Activated B cell treated with CpG ODN at 0.5 μM for 24 hours (primary cell): ENCODE measurements at regions of chrX and their contacts with region 1.

Region 1: GRCh38 chrX:40647307-40648197 is at the start of gene CXorf38:
- DNase-seq: peak; percentile 83
- ATAC-seq: peak; percentile 67
- H3K4me3 Mint-ChIP-seq: peak within 1 kb of the TSS; percentile 94
- H3K27ac Mint-ChIP-seq: peak within 1 kb of the TSS; percentile 93
- H3K4me1 Mint-ChIP-seq: peaks cover 39% of the 10 kb centered on the region
- H3K27me3 Mint-ChIP-seq: no peaks in the 10 kb centered on the region
- CTCF ChIP-seq: no peak
- total RNA-seq, gene CXorf38: 20.9 and 21.9 TPM in 2 replicates

Region 2: GRCh38 chrX:40402831-40403533 is 244.6 kb before region 1 on chrX:
- CTCF ChIA-PET with region 1: no interaction called
- POLR2A ChIA-PET with region 1: no interaction called
- intact Hi-C with region 1: no loop called
- DNase-seq: no peak
- ATAC-seq: no peak
- H3K4me3 Mint-ChIP-seq: no peak overlapping the region
- H3K27ac Mint-ChIP-seq: no peak overlapping the region
- H3K4me1 Mint-ChIP-seq: peaks cover 9% of the 10 kb centered on the region
- H3K27me3 Mint-ChIP-seq: no peaks in the 10 kb centered on the region
- CTCF ChIP-seq: no peak

Region 3: GRCh38 chrX:40580537-40581335 is 66.8 kb before region 1 on chrX and contains the start of gene ATP6AP2:
- CTCF ChIA-PET with region 1: no interaction called
- POLR2A ChIA-PET with region 1: no interaction called
- intact Hi-C with region 1: loop called (anchors 1 kb)
- DNase-seq: peak; percentile 71
- ATAC-seq: peak; percentile 95
- H3K4me3 Mint-ChIP-seq: peak within 1 kb of the TSS; percentile 92
- H3K27ac Mint-ChIP-seq: peak within 1 kb of the TSS; percentile 94
- H3K4me1 Mint-ChIP-seq: peaks cover 27% of the 10 kb centered on the region
- H3K27me3 Mint-ChIP-seq: no peaks in the 10 kb centered on the region
- CTCF ChIP-seq: no peak
- total RNA-seq, gene ATP6AP2: 48.6 and 53.8 TPM in 2 replicates

Region 4: DNA sequence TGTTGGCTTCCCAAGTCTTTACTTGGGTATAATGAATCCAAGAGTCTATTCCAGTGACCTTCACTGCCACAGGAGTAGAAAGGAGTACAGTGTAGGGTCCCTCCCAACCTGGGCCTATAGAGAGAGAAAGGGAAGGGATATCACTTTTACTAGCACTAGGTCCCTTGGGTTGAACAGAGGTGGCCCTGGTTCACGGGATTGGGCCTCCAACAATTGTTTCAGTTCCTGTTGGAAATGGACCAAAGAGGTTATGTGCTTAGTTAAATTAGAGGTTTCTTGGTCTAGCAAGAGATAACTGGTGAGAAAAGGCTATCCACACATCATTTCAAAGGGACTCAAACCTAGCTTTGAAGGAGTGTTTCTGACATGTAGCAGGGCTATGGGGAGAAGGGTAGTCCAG is 144.9 kb after region 1 on chrX:
- CTCF ChIA-PET with region 1: interaction called, 70 read pairs
- POLR2A ChIA-PET with region 1: interaction called, 3 read pairs
- intact Hi-C with region 1: loop called (anchors 1 kb)
- DNase-seq: no peak
- ATAC-seq: no peak
- H3K4me3 Mint-ChIP-seq: no peak overlapping the region
- H3K27ac Mint-ChIP-seq: no peak overlapping the region
- H3K4me1 Mint-ChIP-seq: peaks cover 1% of the 10 kb centered on the region
- H3K27me3 Mint-ChIP-seq: peaks cover 3% of the 10 kb centered on the region
- CTCF ChIP-seq: no peak

Region 5: DNA sequence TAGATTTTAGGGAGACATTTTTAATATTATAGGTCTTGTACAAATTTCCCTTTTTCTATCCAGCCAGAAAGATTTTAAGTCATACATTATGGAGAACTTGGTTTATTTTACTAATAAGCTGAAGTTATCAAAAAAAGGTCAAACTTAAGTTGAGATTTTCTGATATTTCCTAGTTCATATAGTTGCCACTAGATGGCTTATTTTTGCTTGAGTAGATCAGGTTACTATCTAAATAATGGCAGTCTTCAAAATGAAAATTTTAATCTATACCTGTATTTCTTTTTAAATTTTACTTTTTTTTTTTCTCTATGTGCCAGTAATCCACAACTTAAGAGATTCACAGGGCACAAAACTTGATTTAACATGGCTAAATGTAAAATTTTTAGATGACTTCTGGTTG is 490.0 kb after region 1 on chrX:
- CTCF ChIA-PET with region 1: no interaction called
- POLR2A ChIA-PET with region 1: no interaction called
- intact Hi-C with region 1: loop called (anchors 5 kb)
- DNase-seq: no peak
- ATAC-seq: no peak
- H3K4me3 Mint-ChIP-seq: no peak overlapping the region
- H3K27ac Mint-ChIP-seq: no peak overlapping the region
- H3K4me1 Mint-ChIP-seq: no peaks in the 10 kb centered on the region
- H3K27me3 Mint-ChIP-seq: no peaks in the 10 kb centered on the region
- CTCF ChIP-seq: no peak

Region 6: GRCh38 chrX:41984650-41985049 is 1337.1 kb after region 1 on chrX:
- CTCF ChIA-PET with region 1: no interaction called
- POLR2A ChIA-PET with region 1: no interaction called
- intact Hi-C with region 1: no loop called
- DNase-seq: no peak
- ATAC-seq: no peak
- H3K4me3 Mint-ChIP-seq: no peak overlapping the region
- H3K27ac Mint-ChIP-seq: no peak overlapping the region
- H3K4me1 Mint-ChIP-seq: peaks cover 6% of the 10 kb centered on the region
- H3K27me3 Mint-ChIP-seq: peaks cover 9% of the 10 kb centered on the region
- CTCF ChIP-seq: no peak